ENCODE measurements at regions of chr17 and their contacts with region 1.

Region 1: DNA sequence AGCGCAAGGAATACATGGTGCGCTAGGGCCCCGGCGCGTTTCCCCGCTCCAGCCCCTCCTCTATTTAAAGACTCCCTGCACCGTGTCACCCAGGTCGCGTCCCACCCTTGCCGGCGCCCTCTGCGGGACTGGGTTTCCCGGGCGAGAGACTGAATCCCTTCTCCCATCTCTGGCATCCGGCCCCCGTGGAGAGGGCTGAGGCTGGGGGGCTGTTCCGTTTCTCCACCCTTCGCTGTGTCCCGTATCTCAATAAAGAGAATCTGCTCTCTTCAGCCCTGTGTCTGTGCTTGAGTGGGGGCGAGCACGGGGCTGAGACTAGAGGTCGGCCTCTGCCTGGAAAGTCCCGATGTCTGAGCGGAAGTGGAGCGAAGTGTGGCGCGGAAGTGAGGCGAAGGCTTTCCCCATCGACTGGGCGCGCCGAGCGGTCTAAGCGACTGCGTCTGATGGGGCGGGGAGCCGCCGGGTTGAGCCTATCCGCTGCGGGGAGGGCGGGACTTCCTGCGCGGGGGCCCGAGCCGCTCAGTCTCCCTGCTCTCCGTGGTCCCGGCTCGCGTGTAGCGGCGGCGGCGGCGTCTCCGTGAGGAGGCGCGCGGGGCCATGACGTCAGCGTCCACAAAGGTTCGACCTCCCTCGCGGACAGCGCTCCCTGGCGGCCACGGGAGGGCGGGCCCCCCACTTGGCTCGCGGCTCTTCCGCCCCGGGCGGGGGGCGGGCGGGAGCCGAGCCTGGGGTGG is 2.0 kb downstream of the RNASEK start:
- DNase-seq: peak; percentile 98
- H3K4me3 ChIP-seq: peak overlapping the region; percentile 82
- H3K27ac ChIP-seq: peak overlapping the region; percentile 90
- H3K4me1 ChIP-seq: peaks cover 25% of the 10 kb centered on the region
- CTCF ChIP-seq: peak; percentile 62

Region 2: GRCh38 chr17:6856055-6856454 is 158.4 kb before region 1 on chr17:
- CTCF ChIA-PET with region 1: no interaction called
- POLR2A ChIA-PET with region 1: no interaction called
- intact Hi-C with region 1: loop called (anchors 5 kb)
- DNase-seq: peak; percentile 12
- H3K4me3 ChIP-seq: peak overlapping the region; percentile 80
- H3K27ac ChIP-seq: peak overlapping the region; percentile 11
- H3K4me1 ChIP-seq: peaks cover 60% of the 10 kb centered on the region
- CTCF ChIP-seq: no peak

Region 3: DNA sequence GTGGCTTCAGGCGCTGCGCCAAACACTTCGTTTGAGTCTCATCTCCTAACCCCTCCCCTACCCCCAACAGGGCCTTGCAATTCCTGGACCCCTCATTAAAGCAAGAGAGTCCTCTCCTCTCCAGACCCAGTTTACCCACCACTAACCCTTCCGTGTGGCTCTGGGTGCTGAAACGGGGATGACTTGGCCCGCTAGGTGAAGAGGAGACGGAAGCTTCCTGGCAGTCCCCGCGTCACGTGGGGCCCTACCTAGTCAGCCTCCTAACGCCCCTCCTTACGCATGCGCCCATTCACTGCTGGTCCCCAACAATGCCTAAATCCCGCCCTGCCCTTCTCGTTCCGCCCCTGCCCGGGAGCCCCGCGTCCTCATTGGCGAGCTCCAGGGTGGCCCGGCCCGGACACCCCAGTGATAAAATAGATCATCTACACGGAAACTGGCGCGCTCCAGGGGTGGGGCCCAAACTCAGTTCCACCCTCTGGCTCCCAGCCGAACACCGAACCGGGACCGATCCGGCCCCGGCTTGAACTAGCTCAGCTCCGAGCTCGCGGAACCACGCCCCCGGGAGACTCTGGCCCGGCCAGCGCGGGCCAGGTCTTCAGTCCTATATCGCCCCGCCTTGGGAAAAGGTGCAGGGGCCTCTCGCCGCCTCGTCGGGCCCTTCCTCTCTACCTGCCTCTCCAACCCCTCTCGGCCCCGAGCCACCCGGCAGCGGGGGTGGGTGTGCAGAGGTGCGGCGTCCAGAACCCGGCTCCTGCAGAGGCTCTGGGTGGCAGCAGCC is 21.4 kb after region 1 on chr17 and contains the start of gene SLC16A13:
- CTCF ChIA-PET with region 1: no interaction called
- POLR2A ChIA-PET with region 1: interaction called, 4 read pairs
- intact Hi-C with region 1: loop called (anchors 2 kb)
- DNase-seq: peak; percentile 98
- H3K4me3 ChIP-seq: peak within 1 kb of the TSS; percentile 79
- H3K27ac ChIP-seq: peak within 1 kb of the TSS; percentile 61
- H3K4me1 ChIP-seq: peaks cover 19% of the 10 kb centered on the region
- CTCF ChIP-seq: no peak
- total RNA-seq, gene SLC16A13: 0.77 and 2.8 TPM in 2 replicates

Measured in OCI-LY7 (cell line).